Ovary (tissue), 10 donors: ENCODE measurements at regions of chr17 and their contacts with region 1.

Region 1: DNA sequence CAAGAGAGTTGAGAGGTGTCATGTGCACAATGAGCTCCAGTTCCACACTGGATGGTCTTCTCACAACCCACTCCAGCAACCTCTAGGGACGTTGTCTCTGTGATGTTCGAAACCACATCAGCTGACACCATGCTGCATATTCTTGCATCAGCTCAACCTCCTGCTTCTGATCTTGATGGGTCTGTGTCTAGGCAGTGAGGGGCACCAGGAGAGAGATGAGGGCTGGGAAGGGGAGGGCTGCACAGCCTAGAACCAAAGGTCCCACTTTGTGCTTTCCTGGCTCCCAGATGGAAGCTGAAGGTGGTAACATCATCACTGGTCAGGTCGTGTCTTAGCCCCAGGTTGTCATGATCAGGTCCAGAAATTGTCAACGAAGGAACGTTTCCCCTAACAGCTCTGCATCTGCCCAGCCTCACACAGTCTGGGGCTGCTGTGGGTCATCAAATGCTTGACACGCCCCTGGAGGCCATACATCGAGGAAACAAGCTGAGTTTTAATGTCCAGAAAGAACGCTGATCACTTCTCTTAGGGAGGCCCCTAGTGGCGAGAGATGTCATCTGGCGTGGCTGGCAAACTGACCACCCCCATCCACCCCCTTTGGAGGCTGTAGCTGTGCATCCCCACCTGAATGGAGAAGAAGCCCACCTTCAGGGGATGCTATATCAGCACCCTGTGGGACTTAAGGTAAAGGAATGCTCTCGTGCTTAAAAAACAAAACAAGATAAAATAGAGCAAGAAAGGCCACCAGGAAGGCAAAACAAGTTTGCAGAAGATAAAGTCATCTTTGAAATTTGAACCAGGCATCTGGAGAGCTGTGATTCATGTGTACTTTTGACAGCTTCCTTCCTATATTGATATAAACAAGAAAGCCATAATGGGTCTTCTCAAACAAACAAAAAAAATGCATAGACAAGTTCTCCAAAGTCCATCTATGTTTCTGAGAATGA is 58.3 kb downstream of the WIPI1 start:
- DNase-seq: peak; percentile 45 to 70 (median 56)
- H3K4me3 ChIP-seq: no peak overlapping the region
- H3K27ac ChIP-seq: no peak overlapping the region
- H3K4me1 ChIP-seq: no peaks in the 10 kb centered on the region
- H3K27me3 ChIP-seq: no peaks in the 10 kb centered on the region
- CTCF ChIP-seq: peak; percentile 34 to 79 (median 68)
- EP300 ChIP-seq: no peak
- POLR2A ChIP-seq: peak; percentile 10

Region 2: DNA sequence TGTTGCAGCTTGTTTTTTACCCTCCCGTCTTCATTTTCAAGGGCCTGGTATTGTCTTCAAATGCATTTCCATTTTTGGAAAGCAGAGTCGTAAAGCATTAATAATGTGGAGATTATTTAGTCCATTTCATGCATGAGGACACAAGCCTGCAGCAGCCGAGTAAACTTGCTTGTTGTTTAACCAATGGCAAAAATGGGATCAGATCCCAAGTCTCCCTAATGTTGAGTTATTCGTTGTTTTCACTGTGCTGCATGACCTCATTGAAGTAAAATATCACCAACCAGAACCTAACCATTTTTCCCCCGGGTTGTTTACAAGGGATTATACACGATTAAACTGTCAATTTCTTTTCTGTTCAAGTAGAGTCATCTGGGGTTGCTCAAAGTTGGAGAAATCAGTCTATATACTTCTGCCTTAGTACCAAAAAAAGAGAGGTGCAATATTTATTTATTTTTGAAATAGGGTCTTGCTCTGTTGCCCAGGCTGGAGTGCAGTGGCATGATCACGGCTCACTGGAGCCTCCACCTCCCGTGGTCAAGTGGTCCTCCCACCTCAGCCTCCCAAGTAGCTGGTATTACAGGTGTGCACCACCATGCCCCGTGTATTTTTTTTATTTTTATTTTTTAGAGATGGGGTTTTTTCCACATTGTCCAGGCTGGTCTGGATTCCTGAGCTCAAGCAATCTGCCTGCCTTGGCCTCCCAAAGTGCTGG is 138.8 kb before region 1 on chr17:
- intact Hi-C with region 1: loop called in 1 of 4 experiments (anchors 5 kb)
- DNase-seq: no peak
- H3K4me3 ChIP-seq: no peak overlapping the region
- H3K27ac ChIP-seq: no peak overlapping the region
- H3K4me1 ChIP-seq: no peaks in the 10 kb centered on the region
- H3K27me3 ChIP-seq: no peaks in the 10 kb centered on the region
- CTCF ChIP-seq: no peak
- EP300 ChIP-seq: no peak
- POLR2A ChIP-seq: no peak

Region 3: GRCh38 chr17:68273722-68274121 is 125.2 kb before region 1 on chr17:
- intact Hi-C with region 1: loop called in 1 of 4 experiments (anchors 10 kb)
- DNase-seq: no peak
- H3K4me3 ChIP-seq: no peak overlapping the region
- H3K27ac ChIP-seq: no peak overlapping the region
- H3K4me1 ChIP-seq: no peaks in the 10 kb centered on the region
- H3K27me3 ChIP-seq: no peaks in the 10 kb centered on the region
- CTCF ChIP-seq: no peak
- EP300 ChIP-seq: no peak
- POLR2A ChIP-seq: no peak

Region 4: DNA sequence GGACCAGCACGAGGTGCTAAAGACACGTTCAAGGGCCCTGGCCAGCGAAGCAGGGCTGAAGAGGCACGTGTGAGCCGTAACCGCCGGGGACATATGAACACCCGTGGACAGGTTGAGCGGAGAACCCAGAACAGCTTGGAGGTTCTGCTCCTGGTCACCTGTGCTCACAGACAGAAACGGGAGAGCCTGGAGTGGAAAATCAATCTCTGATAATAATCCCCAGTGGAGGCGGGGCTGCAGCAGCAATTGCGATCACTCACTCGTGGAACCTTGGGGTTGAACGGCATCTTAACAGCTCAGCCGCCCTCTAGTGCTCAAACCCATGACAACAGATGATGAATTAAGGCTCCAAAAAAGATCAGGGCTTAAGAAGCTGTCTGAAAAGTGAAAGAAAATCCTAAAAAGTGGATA is 32.7 kb after region 1 on chr17:
- intact Hi-C with region 1: no loop called
- DNase-seq: no peak
- H3K4me3 ChIP-seq: no peak overlapping the region
- H3K27ac ChIP-seq: no peak overlapping the region
- H3K4me1 ChIP-seq: no peaks in the 10 kb centered on the region
- H3K27me3 ChIP-seq: no peaks in the 10 kb centered on the region
- CTCF ChIP-seq: no peak
- EP300 ChIP-seq: no peak
- POLR2A ChIP-seq: no peak